AG04450 (cell line): ENCODE measurements at regions of chr3 and their contacts with region 1.

Region 1: DNA sequence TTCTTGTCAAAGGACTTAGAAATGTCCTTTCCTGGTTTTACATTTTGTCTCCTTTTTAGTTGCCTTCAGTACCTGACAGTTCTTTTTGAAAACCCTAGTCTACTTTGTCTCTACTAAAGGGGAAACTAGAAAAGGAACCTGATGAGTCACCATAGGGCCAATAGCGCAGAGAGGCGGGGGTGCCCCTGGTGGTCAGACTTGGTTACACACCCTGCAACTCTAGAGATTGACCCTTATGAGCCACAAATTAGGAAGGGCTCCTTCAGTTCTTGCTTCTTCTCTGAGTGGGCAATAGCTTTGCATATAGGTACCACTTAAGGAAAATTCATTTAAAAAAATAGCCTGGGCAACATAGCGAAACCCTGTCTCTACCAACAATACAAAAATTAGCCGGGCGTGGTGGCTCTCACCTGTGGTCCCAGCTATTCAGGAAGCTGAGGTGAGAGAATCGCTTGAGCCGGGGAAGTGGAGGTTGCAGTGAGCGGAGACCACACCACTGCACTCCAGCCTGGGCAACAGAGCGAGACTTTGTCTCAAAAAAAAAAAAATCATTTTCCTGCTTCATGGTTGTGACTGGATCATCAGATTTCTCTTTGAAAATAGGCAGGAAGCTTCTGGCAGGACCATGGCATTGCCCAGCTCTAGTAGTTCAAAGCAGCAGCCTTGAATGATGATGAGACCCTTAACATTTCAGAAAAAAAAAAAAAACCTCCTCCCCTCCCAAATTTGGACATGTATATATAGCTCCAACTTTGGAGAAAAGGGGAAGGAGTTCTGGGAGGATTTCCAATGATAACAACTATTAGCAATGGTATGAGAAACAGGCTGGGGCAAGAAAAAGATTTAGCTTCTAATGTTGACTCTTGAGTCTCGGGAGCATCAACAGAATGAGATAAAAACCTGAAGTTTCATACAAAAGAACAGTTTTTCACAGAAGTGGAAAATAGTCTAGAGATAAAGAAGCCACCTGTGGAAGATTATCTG is 45.2 kb upstream of the RASA2 start:
- DNase-seq: peak; percentile 67
- H3K4me3 ChIP-seq: no peak overlapping the region
- H3K27ac ChIP-seq: peak overlapping the region; percentile 83
- H3K27me3 ChIP-seq: no peaks in the 10 kb centered on the region
- CTCF ChIP-seq: peak; percentile 74

Region 2: DNA sequence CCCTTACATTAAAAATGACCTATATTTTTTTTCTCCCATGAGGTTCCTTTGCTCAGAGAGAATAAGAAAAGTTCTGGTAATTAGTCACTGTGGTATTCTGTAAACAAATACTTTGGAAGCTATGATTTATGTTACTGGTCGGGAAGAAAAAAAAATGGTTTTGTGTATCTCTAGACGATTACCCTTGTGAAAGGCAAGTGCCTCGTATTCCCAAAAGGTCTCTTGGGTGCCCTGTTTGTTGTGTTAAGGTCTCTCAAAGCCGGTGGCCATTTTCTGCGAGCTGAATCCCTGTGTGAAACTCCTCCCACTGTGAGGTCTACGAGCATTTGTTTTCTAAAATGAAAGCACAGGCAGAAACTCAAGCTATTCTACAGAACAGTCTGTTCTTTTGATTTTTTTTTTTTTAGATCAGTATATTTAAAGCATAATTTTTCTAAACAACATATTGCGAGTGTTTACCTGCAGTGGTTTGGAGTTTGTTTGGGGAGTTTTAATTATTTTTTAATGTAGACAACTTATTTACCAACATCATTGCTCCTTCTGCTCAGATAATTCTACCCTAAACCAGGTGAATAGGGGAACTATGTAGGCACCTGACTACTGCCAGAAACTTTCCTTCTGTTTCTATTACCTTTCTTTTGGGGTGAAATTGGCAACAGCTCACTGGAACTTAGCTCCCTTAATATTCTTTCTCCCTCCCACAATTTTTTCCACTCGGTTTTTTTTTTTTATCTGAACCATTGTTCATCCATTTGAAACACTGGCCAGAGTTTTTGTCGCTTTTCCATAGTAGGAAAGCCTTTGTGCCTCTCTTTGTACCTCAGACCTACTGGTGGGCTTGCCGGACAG is 29.4 kb before region 1 on chr3:
- CTCF ChIA-PET with region 1: interaction called, 18 read pairs
- POLR2A ChIA-PET with region 1: interaction called, 12 read pairs
- DNase-seq: peak; percentile 76
- H3K4me3 ChIP-seq: peak overlapping the region; percentile 24; the same call in 1 of the 2 replicates
- H3K27ac ChIP-seq: peak overlapping the region; percentile 94
- H3K27me3 ChIP-seq: no peaks in the 10 kb centered on the region
- CTCF ChIP-seq: no peak

Region 3: DNA sequence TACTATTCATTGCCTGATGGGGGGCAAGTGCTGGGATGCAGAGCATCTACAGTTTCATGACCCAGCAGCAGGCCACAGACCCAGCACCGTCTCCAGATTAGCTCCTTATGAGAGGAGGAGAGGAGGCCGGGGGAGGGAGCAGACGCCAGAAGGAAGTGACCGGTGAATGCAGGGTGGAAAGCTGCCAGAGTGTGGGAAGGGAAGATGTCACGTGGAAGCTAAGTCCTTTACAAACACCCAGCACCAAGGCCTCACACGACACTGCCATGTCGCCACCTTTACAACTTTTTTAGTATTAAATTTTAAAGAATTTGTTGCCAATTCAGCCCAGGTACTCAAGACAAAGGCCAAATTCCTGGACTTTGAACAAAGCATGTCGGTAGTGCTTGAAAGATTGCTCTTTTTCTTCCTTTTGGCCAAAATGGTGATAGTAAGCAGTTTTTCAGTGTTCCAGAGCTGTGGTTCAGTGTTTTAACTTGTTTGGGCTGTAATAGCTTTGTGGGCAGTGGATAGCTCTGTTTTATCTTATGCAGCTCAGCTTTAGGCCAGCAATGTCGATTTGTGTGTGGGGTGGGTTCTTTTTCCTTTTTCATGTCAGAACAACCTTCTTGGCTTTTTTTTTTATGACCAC is 15.2 kb before region 1 on chr3:
- CTCF ChIA-PET with region 1: interaction called, 17 read pairs
- POLR2A ChIA-PET with region 1: interaction called, 4 read pairs
- DNase-seq: no peak
- H3K4me3 ChIP-seq: no peak overlapping the region
- H3K27ac ChIP-seq: peak overlapping the region; percentile 48
- H3K27me3 ChIP-seq: no peaks in the 10 kb centered on the region
- CTCF ChIP-seq: no peak